Right cardiac atrium (tissue), 5 donors: ENCODE measurements at regions of chr3 and their contacts with region 1.

Region 1: DNA sequence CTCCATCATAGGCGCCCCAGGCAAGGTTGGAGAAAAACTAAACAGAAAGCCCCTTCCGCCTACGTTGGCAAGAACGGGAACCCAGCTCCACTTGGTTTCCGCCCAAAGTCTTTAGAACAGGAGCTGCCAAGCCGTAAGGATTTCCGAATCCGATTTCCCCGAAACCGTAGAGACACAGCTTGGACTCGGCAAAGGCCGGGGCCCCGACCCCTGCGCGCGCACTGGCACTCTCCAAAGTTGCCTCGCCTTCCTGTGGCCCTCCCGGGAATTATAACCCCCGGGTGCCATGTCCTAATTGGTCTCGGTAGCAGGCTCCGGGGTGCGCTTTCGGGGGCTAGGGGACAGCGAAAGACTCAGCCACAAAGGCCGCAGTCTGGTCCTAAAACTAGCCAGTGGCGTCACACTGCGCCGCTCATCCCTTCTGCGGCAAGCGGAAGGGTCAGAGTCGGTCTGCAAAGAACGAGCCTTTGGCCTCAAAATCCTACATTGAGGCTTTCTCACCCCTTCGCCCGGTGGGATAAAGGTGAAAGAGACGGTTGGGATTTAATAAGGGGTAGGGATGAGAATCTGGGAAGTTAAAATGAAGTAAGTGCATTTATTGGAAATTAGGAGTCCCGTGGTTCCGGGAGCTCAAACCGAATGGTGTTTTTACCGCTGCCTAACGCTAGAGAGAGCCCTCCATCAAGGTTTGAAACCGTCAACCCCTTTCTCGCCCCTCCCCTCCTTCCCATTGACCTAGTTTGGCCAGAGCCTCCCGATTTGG is 6.8 kb downstream of the BCL6 start:
- DNase-seq: peak; percentile 88 to 95 (median 92)
- ATAC-seq: peak; percentile 77
- H3K4me3 ChIP-seq: peak overlapping the region; percentile 74
- H3K27ac ChIP-seq: peak overlapping the region; percentile 96
- H3K4me1 ChIP-seq: peaks cover 6% of the 10 kb centered on the region
- H3K27me3 ChIP-seq: no peaks in the 10 kb centered on the region

Region 2: GRCh38 chr3:188052169-188053030 is 313.9 kb after region 1 on chr3:
- intact Hi-C with region 1: loop called in 2 of 4 experiments (anchors 5 to 10 kb)
- DNase-seq: peak; percentile 92 to 96 (median 95)
- ATAC-seq: peak; percentile 97 to 99
- H3K4me3 ChIP-seq: no peak overlapping the region
- H3K27ac ChIP-seq: peak overlapping the region; percentile 94
- H3K4me1 ChIP-seq: peaks cover 3% of the 10 kb centered on the region
- H3K27me3 ChIP-seq: no peaks in the 10 kb centered on the region

Region 3: DNA sequence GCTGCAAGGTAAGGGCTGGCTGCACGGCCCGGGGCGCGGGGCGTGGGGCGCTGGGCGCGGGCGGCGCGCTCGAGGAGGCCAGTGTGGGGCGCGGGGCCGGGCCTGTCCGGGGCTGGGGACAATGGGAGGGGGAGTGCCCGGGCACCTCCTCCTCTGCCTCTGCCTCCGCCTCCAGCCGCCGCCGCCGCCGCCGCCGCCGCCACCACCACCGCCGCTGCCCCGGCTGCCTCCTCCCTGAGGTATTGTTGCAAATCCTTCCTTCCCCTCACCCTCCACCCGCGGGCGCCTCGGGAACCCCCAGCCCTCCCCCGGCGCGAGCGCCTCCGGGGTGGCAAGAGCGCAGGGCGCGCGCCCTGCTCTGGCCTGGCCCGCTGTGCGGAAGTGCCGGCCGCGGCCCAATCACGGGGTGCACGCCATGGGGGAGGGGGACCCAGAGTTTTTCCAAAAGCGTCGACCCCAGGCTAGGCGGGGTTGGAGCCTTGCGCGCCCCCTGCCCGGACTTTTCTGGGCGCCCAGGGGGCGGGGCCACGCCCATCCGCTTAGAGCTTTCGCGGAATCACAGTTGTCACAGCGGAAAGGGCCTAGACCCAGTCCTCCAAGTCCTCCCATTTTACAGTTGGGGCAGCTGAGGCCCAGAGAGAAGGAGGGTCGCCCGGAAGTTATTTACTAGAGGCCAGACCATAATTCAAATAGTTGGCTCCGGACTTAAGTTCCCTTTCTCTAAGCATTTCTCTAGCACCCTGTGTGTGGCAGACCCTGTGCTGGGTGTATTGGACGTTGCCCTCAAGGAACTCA is 415.7 kb after region 1 on chr3 and contains the start of gene LPP:
- intact Hi-C with region 1: loop called in 2 of 4 experiments (anchors 2 to 5 kb)
- DNase-seq: peak; percentile 80 to 93 (median 92)
- ATAC-seq: peak; percentile 93
- H3K4me3 ChIP-seq: peak within 1 kb of the TSS; percentile 82
- H3K27ac ChIP-seq: peak within 1 kb of the TSS; percentile 80
- H3K4me1 ChIP-seq: peaks cover 23% of the 10 kb centered on the region
- H3K27me3 ChIP-seq: no peaks in the 10 kb centered on the region
- total RNA-seq, gene LPP: 141 to 205 (median 171) TPM

Region 4: GRCh38 chr3:189148081-189148507 is 1409.6 kb after region 1 on chr3:
- intact Hi-C with region 1: loop called (anchors 5 to 10 kb)
- DNase-seq: peak; percentile 46 to 78 (median 69)
- ATAC-seq: peak; percentile 50 to 73
- H3K4me3 ChIP-seq: no peak overlapping the region
- H3K27ac ChIP-seq: no peak overlapping the region
- H3K4me1 ChIP-seq: no peaks in the 10 kb centered on the region
- H3K27me3 ChIP-seq: no peaks in the 10 kb centered on the region

Region 5: GRCh38 chr3:189233225-189233858 is 1494.8 kb after region 1 on chr3:
- intact Hi-C with region 1: loop called in 1 of 4 experiments (anchors 10 kb)
- DNase-seq: peak; percentile 67 to 85 (median 69)
- ATAC-seq: peak; percentile 86 to 89
- H3K4me3 ChIP-seq: no peak overlapping the region
- H3K27ac ChIP-seq: no peak overlapping the region
- H3K4me1 ChIP-seq: no peaks in the 10 kb centered on the region
- H3K27me3 ChIP-seq: no peaks in the 10 kb centered on the region